MCF 10A (cell line): ENCODE measurements at regions of chr4 and their contacts with region 1.

Region 1: GRCh38 chr4:153676998-153677397 is 7.1 kb upstream of the TLR2 start:
- DNase-seq: peak; percentile 95
- H3K4me3 Mint-ChIP-seq: no peak overlapping the region
- H3K27ac Mint-ChIP-seq: peak overlapping the region; percentile 23
- H3K4me1 Mint-ChIP-seq: no peaks in the 10 kb centered on the region
- H3K27me3 Mint-ChIP-seq: no peaks in the 10 kb centered on the region
- CTCF ChIP-seq: no peak

Region 2: DNA sequence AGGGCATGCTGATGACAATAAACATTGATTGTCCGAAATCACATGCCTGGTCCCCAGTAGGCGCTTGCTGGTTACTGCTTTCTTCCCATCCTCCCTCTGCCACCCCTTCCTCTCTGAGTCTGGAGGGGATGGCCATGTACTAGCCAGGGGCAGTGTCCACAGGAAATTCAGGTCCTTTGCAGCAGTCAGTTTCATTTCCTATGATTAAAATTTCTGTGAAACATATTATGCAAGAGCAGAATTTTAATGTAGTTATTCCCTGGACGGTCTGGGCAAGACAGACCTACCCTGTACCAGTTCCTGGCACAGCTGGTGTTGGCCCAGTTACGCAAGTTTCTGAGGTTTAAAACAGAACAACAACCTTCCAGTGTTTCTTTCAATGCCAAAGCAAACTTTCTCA is 21.1 kb before region 1 on chr4:
- CTCF ChIA-PET with region 1: interaction called, 4 read pairs
- POLR2A ChIA-PET with region 1: interaction called, 18 read pairs
- intact Hi-C with region 1: loop called (anchors 2 kb)
- DNase-seq: peak; percentile 97
- H3K4me3 Mint-ChIP-seq: peak overlapping the region; percentile 13
- H3K27ac Mint-ChIP-seq: peak overlapping the region; percentile 46
- H3K4me1 Mint-ChIP-seq: peaks cover 41% of the 10 kb centered on the region
- H3K27me3 Mint-ChIP-seq: no peaks in the 10 kb centered on the region
- CTCF ChIP-seq: no peak

Region 3: GRCh38 chr4:153725136-153725830 is 48.3 kb after region 1 on chr4:
- CTCF ChIA-PET with region 1: no interaction called
- POLR2A ChIA-PET with region 1: no interaction called
- intact Hi-C with region 1: no loop called
- DNase-seq: no peak
- H3K4me3 Mint-ChIP-seq: no peak overlapping the region
- H3K27ac Mint-ChIP-seq: no peak overlapping the region
- H3K4me1 Mint-ChIP-seq: no peaks in the 10 kb centered on the region
- H3K27me3 Mint-ChIP-seq: no peaks in the 10 kb centered on the region
- CTCF ChIP-seq: no peak

Region 4: GRCh38 chr4:153759407-153760316 is 82.7 kb after region 1 on chr4 and contains the start of gene RNF175:
- CTCF ChIA-PET with region 1: no interaction called
- POLR2A ChIA-PET with region 1: no interaction called
- intact Hi-C with region 1: no loop called
- DNase-seq: no peak
- H3K4me3 Mint-ChIP-seq: peak within 1 kb of the TSS; percentile 55
- H3K27ac Mint-ChIP-seq: no peak within 1 kb of the TSS
- H3K4me1 Mint-ChIP-seq: no peaks in the 10 kb centered on the region
- H3K27me3 Mint-ChIP-seq: no peaks in the 10 kb centered on the region
- CTCF ChIP-seq: no peak
- total RNA-seq, gene RNF175: 0.42 and 0.66 TPM in 2 replicates

Region 5: GRCh38 chr4:154164931-154165839 is 488.2 kb after region 1 on chr4:
- CTCF ChIA-PET with region 1: no interaction called
- POLR2A ChIA-PET with region 1: no interaction called
- intact Hi-C with region 1: no loop called
- DNase-seq: peak; percentile 93
- H3K4me3 Mint-ChIP-seq: peak overlapping the region; percentile 9
- H3K27ac Mint-ChIP-seq: peak overlapping the region; percentile 84
- H3K4me1 Mint-ChIP-seq: peaks cover 36% of the 10 kb centered on the region
- H3K27me3 Mint-ChIP-seq: no peaks in the 10 kb centered on the region
- CTCF ChIP-seq: no peak